Activated T-helper 2 cell treated with anti-CD3 and anti-CD28 coated beads, Interferon-gamma antibody, Interleukin-2, Interleukin-4, amounts not matched to agents 10 μg/mL and 5 μg/mL and 100 μg/mL, durations not matched to agents 14 hours and 24 hours and 36 hours (primary cell): ENCODE measurements at regions of chr2 and their contacts with region 1.

Region 1: DNA sequence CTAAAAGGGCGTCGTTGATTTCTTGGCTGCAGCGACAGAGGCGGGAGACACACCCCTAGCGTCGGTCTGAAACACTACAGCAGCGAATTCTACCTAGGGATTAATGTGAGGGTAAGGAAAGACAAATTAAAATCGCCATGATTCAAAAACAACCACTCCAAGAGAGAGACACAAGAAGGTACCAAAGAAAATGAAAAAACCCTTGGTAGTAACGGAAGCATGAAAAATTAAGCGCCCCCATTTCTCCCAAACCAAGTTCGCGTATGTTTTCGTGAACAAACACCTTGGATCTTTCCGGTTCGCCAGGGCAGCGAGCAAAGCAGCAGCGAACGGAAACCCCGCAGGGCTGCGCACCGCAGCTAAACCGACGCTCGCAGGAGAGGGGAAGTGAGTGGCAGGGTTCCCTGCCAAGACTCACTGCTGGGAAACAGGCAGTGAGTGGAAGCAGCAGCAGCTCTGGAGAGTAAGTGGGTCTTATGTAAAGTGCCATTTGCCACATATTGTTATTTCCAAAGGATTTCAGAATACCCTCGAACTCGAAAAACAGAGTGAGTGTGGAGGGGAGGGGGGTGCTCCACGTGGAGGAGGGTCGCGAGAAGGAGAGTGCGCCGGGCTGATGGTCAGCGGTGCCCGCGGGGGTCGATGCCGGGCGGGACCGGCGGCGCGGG is 1.0 kb downstream of the PPP3R1 start:
- DNase-seq: peak; percentile 75
- H3K4me3 Mint-ChIP-seq: peak overlapping the region; percentile 87
- H3K27ac Mint-ChIP-seq: peak overlapping the region; percentile 94
- H3K4me1 Mint-ChIP-seq: peaks cover 29% of the 10 kb centered on the region
- H3K27me3 Mint-ChIP-seq: no peaks in the 10 kb centered on the region

Region 2: DNA sequence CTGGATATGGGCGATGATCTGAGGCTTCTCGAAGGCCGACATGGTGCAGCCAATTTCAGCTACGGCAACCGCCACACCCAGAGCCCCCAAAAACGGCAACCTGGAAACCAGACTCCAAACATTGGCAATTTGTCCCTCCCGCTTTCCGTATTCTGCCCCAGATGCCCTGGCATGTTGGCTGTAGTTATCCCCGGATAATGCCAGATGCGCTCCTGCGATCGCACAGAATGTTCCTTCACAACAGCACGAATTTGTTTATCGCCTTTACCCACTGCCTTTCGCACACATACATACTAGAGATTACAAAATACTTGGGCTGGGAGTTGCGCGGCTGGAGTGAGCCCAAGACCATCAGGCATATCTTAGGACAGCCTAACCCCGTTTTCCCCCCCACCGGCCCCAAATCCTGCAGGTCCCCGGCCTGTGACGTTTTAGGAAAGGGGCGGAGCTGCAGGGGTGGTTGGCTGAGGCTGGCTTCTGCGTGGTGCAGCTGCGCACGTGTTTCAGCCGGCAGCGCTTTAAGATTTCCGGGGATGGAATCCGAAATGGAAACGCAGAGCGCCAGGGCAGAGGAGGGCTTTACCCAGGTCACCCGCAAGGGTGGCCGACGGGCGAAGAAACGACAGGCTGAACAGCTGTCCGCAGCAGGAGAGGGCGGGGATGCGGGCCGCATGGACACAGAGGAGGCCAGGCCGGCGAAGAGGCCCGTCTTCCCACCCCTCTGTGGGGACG is 93.8 kb before region 1 on chr2 and contains the start of gene PNO1:
- intact Hi-C with region 1: loop called (anchors 1 kb)
- DNase-seq: peak; percentile 95
- H3K4me3 Mint-ChIP-seq: peak within 1 kb of the TSS; percentile 95
- H3K27ac Mint-ChIP-seq: peak within 1 kb of the TSS; percentile 99
- H3K4me1 Mint-ChIP-seq: peaks cover 40% of the 10 kb centered on the region
- H3K27me3 Mint-ChIP-seq: no peaks in the 10 kb centered on the region
- total RNA-seq, gene PNO1: 24.5 and 24.7 TPM in 2 replicates

Region 3: GRCh38 chr2:68203587-68203986 is 47.7 kb before region 1 on chr2:
- intact Hi-C with region 1: loop called (anchors 1 kb)
- DNase-seq: no peak
- H3K4me3 Mint-ChIP-seq: peak overlapping the region; percentile 64
- H3K27ac Mint-ChIP-seq: peak overlapping the region; percentile 90
- H3K4me1 Mint-ChIP-seq: peaks cover 53% of the 10 kb centered on the region
- H3K27me3 Mint-ChIP-seq: no peaks in the 10 kb centered on the region

Region 4: GRCh38 chr2:68287580-68288441 is 36.5 kb after region 1 on chr2:
- intact Hi-C with region 1: no loop called
- DNase-seq: no peak
- H3K4me3 Mint-ChIP-seq: no peak overlapping the region
- H3K27ac Mint-ChIP-seq: no peak overlapping the region
- H3K4me1 Mint-ChIP-seq: no peaks in the 10 kb centered on the region
- H3K27me3 Mint-ChIP-seq: peaks cover 51% of the 10 kb centered on the region

Region 5: GRCh38 chr2:68336192-68336591 is 84.9 kb after region 1 on chr2:
- intact Hi-C with region 1: no loop called
- DNase-seq: no peak
- H3K4me3 Mint-ChIP-seq: no peak overlapping the region
- H3K27ac Mint-ChIP-seq: no peak overlapping the region
- H3K4me1 Mint-ChIP-seq: no peaks in the 10 kb centered on the region
- H3K27me3 Mint-ChIP-seq: peaks cover 41% of the 10 kb centered on the region

Region 6: GRCh38 chr2:68620772-68621171 is 369.5 kb after region 1 on chr2:
- intact Hi-C with region 1: no loop called
- DNase-seq: no peak
- H3K4me3 Mint-ChIP-seq: no peak overlapping the region
- H3K27ac Mint-ChIP-seq: no peak overlapping the region
- H3K4me1 Mint-ChIP-seq: no peaks in the 10 kb centered on the region
- H3K27me3 Mint-ChIP-seq: peaks cover 3% of the 10 kb centered on the region

Region 7: GRCh38 chr2:68734688-68735525 is 483.6 kb after region 1 on chr2 and contains the start of gene ARHGAP25:
- intact Hi-C with region 1: loop called (anchors 10 kb)
- DNase-seq: peak; percentile 49
- H3K4me3 Mint-ChIP-seq: no peak within 1 kb of the TSS
- H3K27ac Mint-ChIP-seq: no peak within 1 kb of the TSS
- H3K4me1 Mint-ChIP-seq: peaks cover 29% of the 10 kb centered on the region
- H3K27me3 Mint-ChIP-seq: no peaks in the 10 kb centered on the region
- total RNA-seq, gene ARHGAP25: 39.9 and 41.3 TPM in 2 replicates

Region 8: GRCh38 chr2:70248181-70248847 is 1997.0 kb after region 1 on chr2 and contains the start of gene TIA1:
- intact Hi-C with region 1: loop called (anchors 5 kb)
- DNase-seq: peak; percentile 98
- H3K4me3 Mint-ChIP-seq: peak within 1 kb of the TSS; percentile 95
- H3K27ac Mint-ChIP-seq: peak within 1 kb of the TSS; percentile 98
- H3K4me1 Mint-ChIP-seq: peaks cover 22% of the 10 kb centered on the region
- H3K27me3 Mint-ChIP-seq: no peaks in the 10 kb centered on the region
- total RNA-seq, gene TIA1: 113 TPM in 2 replicates